Endothelial cell of umbilical vein (primary cell): ENCODE measurements at regions of chr19 and their contacts with region 1.

Region 1: GRCh38 chr19:45558399-45558878 is 26.2 kb downstream of the OPA3 start:
- DNase-seq: peak; percentile 46
- H3K4me3 ChIP-seq: no peak overlapping the region
- H3K27ac ChIP-seq: no peak overlapping the region
- H3K4me1 ChIP-seq: no peaks in the 10 kb centered on the region
- H3K27me3 ChIP-seq: no peaks in the 10 kb centered on the region
- CTCF ChIP-seq: peak; percentile 70 to 78
- POLR2A ChIP-seq: no peak

Region 2: GRCh38 chr19:45485305-45486077 is 72.9 kb before region 1 on chr19:
- CTCF ChIA-PET with region 1: interaction called, 13 read pairs
- POLR2A ChIA-PET with region 1: no interaction called
- dilution Hi-C with region 1: no loop called
- intact Hi-C with region 1: no loop called
- DNase-seq: peak; percentile 85
- H3K4me3 ChIP-seq: peak overlapping the region; percentile 56 to 66 (median 61)
- H3K27ac ChIP-seq: peak overlapping the region; percentile 19
- H3K4me1 ChIP-seq: no peaks in the 10 kb centered on the region
- H3K27me3 ChIP-seq: no peaks in the 10 kb centered on the region
- CTCF ChIP-seq: peak; percentile 79 to 96
- POLR2A ChIP-seq: no peak

Region 3: DNA sequence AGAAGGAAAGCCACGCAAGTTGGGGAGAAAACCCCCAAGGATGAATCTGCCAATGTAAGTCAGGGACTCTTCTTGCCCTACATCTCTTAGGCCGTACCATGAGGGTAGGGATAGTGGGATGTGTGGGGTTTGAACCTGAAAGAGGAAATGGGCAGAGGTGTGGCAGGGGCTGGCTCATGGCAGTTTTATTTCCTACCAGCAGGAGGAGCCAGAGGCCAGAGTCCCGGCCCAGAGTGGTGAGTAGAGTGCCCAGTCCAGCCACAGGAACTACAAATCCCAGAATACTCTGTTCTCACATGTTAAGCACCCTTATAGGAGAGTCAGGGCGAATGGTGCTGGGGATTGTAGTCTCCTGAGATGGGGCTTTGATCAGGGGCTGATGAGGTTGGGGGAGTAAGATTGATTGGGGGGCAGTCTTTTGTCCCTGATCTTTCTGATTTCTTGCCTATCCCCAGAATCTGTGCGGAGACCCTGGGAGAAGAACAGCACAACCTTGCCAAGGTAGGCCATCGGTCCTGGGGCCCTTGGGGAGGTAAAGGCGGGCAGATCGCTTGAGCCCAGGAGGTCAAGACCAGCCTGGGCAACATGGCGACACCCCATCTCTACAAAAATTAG is 34.7 kb before region 1 on chr19:
- CTCF ChIA-PET with region 1: interaction called, 21 read pairs
- POLR2A ChIA-PET with region 1: no interaction called
- dilution Hi-C with region 1: no loop called
- intact Hi-C with region 1: loop called (anchors 1 kb)
- DNase-seq: peak; percentile 86
- H3K4me3 ChIP-seq: no peak overlapping the region
- H3K27ac ChIP-seq: no peak overlapping the region
- H3K4me1 ChIP-seq: no peaks in the 10 kb centered on the region
- H3K27me3 ChIP-seq: no peaks in the 10 kb centered on the region
- CTCF ChIP-seq: peak; percentile 82 to 92
- POLR2A ChIP-seq: peak; percentile 46

Region 4: DNA sequence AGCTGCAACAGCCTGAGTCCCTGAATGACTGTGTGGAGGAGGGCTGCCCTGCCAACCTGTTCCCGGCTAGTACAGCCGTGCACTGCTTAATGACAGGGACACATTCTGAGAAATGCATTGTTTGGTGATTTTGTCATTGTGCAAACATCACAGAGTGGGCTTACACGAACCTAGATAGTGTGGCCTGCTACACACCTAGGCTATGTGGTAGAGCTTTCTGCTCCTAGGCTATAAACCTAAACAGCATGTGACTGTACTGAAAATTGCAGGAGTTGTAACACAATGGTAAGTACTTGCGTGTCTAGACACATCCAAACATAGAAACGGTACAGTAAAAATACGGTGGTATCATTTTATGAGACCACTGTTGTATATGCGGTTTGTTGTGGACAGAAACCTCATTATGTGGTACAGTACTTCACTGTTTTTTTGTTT is 16.2 kb before region 1 on chr19:
- CTCF ChIA-PET with region 1: interaction called, 15 read pairs
- POLR2A ChIA-PET with region 1: no interaction called
- dilution Hi-C with region 1: no loop called
- intact Hi-C with region 1: no loop called
- DNase-seq: no peak
- H3K4me3 ChIP-seq: no peak overlapping the region
- H3K27ac ChIP-seq: no peak overlapping the region
- H3K4me1 ChIP-seq: no peaks in the 10 kb centered on the region
- H3K27me3 ChIP-seq: no peaks in the 10 kb centered on the region
- CTCF ChIP-seq: no peak
- POLR2A ChIP-seq: no peak

Region 5: DNA sequence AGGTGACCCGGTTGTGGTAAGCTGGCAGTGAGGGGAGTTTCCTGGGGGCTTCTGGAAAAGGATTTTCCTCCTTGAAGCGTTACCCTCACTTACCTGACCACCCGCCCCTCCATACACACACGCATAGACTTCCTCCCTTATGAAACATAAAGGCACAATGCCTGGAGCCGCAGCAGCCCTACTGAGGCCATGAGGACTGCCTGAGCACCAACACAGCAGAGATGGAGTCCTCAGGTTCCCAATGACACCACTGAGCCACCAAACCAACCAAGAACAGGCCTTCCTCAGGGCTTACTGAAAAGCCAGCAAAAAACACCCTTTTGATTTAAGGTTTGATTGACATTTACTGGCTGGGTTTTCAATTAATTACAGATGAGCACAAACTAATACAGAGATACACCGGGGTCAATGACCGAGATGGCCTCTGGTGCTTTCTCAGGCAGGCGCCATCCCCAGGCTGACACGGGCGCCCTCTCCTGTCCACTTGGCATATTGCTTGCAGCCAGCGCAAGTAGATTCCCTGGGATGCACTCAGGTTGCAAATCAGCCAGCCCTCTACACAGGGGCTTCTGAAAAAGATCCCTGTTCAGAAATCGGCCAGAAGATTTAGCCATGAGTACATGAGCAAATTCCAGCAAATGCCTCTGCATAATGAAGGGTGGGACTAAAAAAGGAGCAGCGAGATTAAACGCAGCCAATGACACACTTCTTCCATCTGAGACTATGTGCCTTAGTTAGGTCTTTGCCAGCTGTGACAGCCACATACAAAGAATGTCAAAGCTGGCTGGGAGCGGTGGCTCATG is 11.4 kb after region 1 on chr19:
- CTCF ChIA-PET with region 1: interaction called, 13 read pairs
- POLR2A ChIA-PET with region 1: no interaction called
- dilution Hi-C with region 1: no loop called
- intact Hi-C with region 1: no loop called
- DNase-seq: peak; percentile 41
- H3K4me3 ChIP-seq: no peak overlapping the region
- H3K27ac ChIP-seq: peak overlapping the region; percentile 19
- H3K4me1 ChIP-seq: peaks cover 10% of the 10 kb centered on the region
- H3K27me3 ChIP-seq: no peaks in the 10 kb centered on the region
- CTCF ChIP-seq: peak; percentile 65 to 78
- POLR2A ChIP-seq: no peak